CD8-positive, alpha-beta T cell (primary cell): ENCODE measurements at regions of chr1 and their contacts with region 1.

Region 1: GRCh38 chr1:112390775-112391602 is 5.0 kb upstream of the CTTNBP2NL start:
- DNase-seq: peak; percentile 51 to 89 (median 75)
- ATAC-seq: peak; percentile 89
- H3K4me3 ChIP-seq: no peak overlapping the region
- H3K4me3 Mint-ChIP-seq: no peak overlapping the region
- H3K27ac ChIP-seq: no peak overlapping the region
- H3K27ac Mint-ChIP-seq: no peak overlapping the region
- H3K4me1 ChIP-seq: peaks cover 10% of the 10 kb centered on the region
- H3K4me1 Mint-ChIP-seq: peaks cover 10% of the 10 kb centered on the region
- H3K27me3 ChIP-seq: peaks cover 7 to 11% of the 10 kb centered on the region in 2 experiments
- H3K27me3 Mint-ChIP-seq: peaks cover 46% of the 10 kb centered on the region
- CTCF ChIP-seq: peak; percentile 85

Region 2: DNA sequence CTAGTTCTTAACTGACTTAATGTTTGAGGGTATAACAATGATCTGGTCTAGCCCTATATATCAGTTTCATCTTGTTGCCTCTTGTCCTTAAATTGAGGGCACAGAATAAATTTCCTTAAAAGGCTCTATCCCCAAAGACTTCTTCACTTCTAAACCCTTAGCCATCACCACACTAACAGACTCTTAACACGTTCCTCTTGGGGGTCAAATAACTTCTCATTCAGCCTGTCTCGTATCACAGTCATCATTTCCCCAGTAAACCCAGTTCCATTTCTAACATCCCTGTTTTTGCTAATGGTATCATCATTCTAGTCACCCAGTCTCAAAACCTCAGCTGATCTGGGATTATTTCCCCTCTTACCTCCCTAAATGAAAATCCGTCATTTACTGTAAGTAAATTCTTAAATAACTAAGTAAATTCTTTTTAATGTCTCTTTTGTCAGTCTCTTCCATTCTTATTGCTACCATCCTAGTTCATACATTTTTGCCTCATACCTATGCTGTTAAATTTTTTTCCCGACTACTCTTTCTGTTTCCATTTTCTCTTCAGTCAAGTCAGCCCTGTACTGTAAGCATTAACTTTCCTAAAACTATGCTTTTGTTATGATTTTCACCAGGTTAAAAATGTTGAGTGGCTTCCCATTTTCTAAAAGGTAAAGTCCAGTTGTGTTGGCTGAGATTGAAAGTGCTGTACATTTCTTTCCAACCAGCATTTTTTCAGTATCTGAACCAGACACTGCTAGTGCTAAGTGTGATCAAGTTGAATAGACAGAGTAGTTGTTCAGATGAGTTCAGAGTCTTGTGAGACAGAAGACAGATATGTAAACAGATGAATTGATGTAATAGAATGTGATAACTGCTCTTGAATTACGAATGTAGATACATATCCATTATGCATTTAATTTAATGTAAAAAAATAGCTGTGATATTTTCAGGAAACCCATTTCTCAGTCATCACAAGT is 12.0 kb after region 1 on chr1:
- CTCF ChIA-PET with region 1: interaction called, 12 read pairs
- POLR2A ChIA-PET with region 1: no interaction called
- intact Hi-C with region 1: no loop called
- DNase-seq: no peak
- ATAC-seq: no peak
- H3K4me3 ChIP-seq: no peak overlapping the region
- H3K4me3 Mint-ChIP-seq: no peak overlapping the region
- H3K27ac ChIP-seq: no peak overlapping the region
- H3K27ac Mint-ChIP-seq: no peak overlapping the region
- H3K4me1 ChIP-seq: no peaks in the 10 kb centered on the region
- H3K4me1 Mint-ChIP-seq: no peaks in the 10 kb centered on the region
- H3K27me3 ChIP-seq: no peaks in the 10 kb centered on the region
- H3K27me3 Mint-ChIP-seq: peaks cover 5% of the 10 kb centered on the region
- CTCF ChIP-seq: no peak

Region 3: GRCh38 chr1:112583366-112583765 is 192.4 kb after region 1 on chr1:
- CTCF ChIA-PET with region 1: no interaction called
- POLR2A ChIA-PET with region 1: no interaction called
- intact Hi-C with region 1: no loop called
- DNase-seq: no peak
- ATAC-seq: no peak
- H3K4me3 ChIP-seq: no peak overlapping the region
- H3K4me3 Mint-ChIP-seq: no peak overlapping the region
- H3K27ac ChIP-seq: no peak overlapping the region
- H3K27ac Mint-ChIP-seq: no peak overlapping the region
- H3K4me1 ChIP-seq: no peaks in the 10 kb centered on the region
- H3K4me1 Mint-ChIP-seq: no peaks in the 10 kb centered on the region
- H3K27me3 ChIP-seq: no peaks in the 10 kb centered on the region
- H3K27me3 Mint-ChIP-seq: no peaks in the 10 kb centered on the region
- CTCF ChIP-seq: no peak

Region 4: GRCh38 chr1:112614460-112615065 is 223.6 kb after region 1 on chr1:
- CTCF ChIA-PET with region 1: interaction called, 17 read pairs
- POLR2A ChIA-PET with region 1: no interaction called
- intact Hi-C with region 1: loop called (anchors 1 to 2 kb)
- DNase-seq: peak in 2 of 9 experiments; percentile 46 to 58
- ATAC-seq: no peak
- H3K4me3 ChIP-seq: no peak overlapping the region
- H3K4me3 Mint-ChIP-seq: no peak overlapping the region
- H3K27ac ChIP-seq: no peak overlapping the region
- H3K27ac Mint-ChIP-seq: no peak overlapping the region
- H3K4me1 ChIP-seq: peaks cover 8% of the 10 kb centered on the region
- H3K4me1 Mint-ChIP-seq: peaks cover 12% of the 10 kb centered on the region
- H3K27me3 ChIP-seq: no peaks in the 10 kb centered on the region
- H3K27me3 Mint-ChIP-seq: no peaks in the 10 kb centered on the region
- CTCF ChIP-seq: peak; percentile 60

Region 5: GRCh38 chr1:112809253-112809684 is 418.3 kb after region 1 on chr1:
- CTCF ChIA-PET with region 1: interaction called, 6 read pairs
- POLR2A ChIA-PET with region 1: no interaction called
- intact Hi-C with region 1: loop called in 1 of 2 experiments (anchors 2 kb)
- DNase-seq: peak; percentile 23 to 73 (median 54)
- ATAC-seq: peak; percentile 63
- H3K4me3 ChIP-seq: no peak overlapping the region
- H3K4me3 Mint-ChIP-seq: no peak overlapping the region
- H3K27ac ChIP-seq: no peak overlapping the region
- H3K27ac Mint-ChIP-seq: no peak overlapping the region
- H3K4me1 ChIP-seq: no peaks in the 10 kb centered on the region
- H3K4me1 Mint-ChIP-seq: no peaks in the 10 kb centered on the region
- H3K27me3 ChIP-seq: no peaks in the 10 kb centered on the region
- H3K27me3 Mint-ChIP-seq: peaks cover 6% of the 10 kb centered on the region
- CTCF ChIP-seq: peak; percentile 62